Activated CD4-positive, alpha-beta T cell treated with anti-CD3 and anti-CD28 coated beads for 36 hours (primary cell): ENCODE measurements at regions of chrX and their contacts with region 1.

Region 1: DNA sequence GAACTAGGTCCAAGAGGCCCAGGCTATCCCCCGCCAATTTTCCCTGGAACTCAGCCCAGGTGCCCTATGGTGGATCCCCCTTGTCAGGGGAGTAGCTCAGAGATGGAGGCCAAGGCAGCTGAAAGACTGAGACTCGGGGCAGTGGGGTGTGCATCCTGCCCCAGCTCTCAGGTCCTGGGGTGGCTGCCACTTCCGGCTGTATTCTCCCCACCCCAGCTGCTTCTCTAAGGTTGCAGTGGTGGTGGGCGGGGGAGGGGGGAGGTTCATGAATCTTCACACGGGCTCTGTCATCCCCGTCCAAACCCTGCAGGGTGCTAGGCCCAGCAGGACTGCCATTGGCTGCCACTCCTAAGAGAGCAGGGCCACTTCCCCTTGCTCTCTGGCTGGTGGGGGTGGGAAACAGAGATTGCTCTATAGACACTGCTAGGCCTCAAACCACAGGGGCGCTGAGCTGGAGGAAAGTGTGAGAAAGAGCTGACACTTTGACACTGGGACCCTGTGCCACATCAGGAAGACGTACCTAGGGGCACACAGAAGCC is 1.5 kb downstream of the SASH3 start:
- DNase-seq: peak; percentile 91
- ATAC-seq: peak; percentile 80
- H3K4me3 Mint-ChIP-seq: peak overlapping the region; percentile 79
- H3K27ac Mint-ChIP-seq: peak overlapping the region; percentile 97
- H3K4me1 Mint-ChIP-seq: peaks cover 50% of the 10 kb centered on the region
- H3K27me3 Mint-ChIP-seq: no peaks in the 10 kb centered on the region

Region 2: GRCh38 chrX:129678614-129679195 is 102.5 kb before region 1 on chrX:
- CTCF ChIA-PET with region 1: no interaction called
- POLR2A ChIA-PET with region 1: no interaction called
- intact Hi-C with region 1: loop called in 1 of 2 experiments (anchors 1 kb)
- DNase-seq: peak; percentile 62
- ATAC-seq: peak; percentile 69
- H3K4me3 Mint-ChIP-seq: peak overlapping the region; percentile 21
- H3K27ac Mint-ChIP-seq: peak overlapping the region; percentile 55
- H3K4me1 Mint-ChIP-seq: peaks cover 15% of the 10 kb centered on the region
- H3K27me3 Mint-ChIP-seq: no peaks in the 10 kb centered on the region

Region 3: GRCh38 chrX:129759576-129760061 is 21.6 kb before region 1 on chrX:
- CTCF ChIA-PET with region 1: interaction called, 5 read pairs
- POLR2A ChIA-PET with region 1: interaction called, 5 read pairs
- intact Hi-C with region 1: loop called (anchors 1 kb)
- DNase-seq: peak; percentile 79
- ATAC-seq: peak; percentile 81
- H3K4me3 Mint-ChIP-seq: peak overlapping the region; percentile 35
- H3K27ac Mint-ChIP-seq: peak overlapping the region; percentile 90
- H3K4me1 Mint-ChIP-seq: peaks cover 55% of the 10 kb centered on the region
- H3K27me3 Mint-ChIP-seq: no peaks in the 10 kb centered on the region

Region 4: GRCh38 chrX:130086447-130087206 is 305.4 kb after region 1 on chrX:
- CTCF ChIA-PET with region 1: no interaction called
- POLR2A ChIA-PET with region 1: no interaction called
- intact Hi-C with region 1: loop called in 1 of 2 experiments (anchors 5 kb)
- DNase-seq: peak; percentile 85
- ATAC-seq: peak; percentile 53
- H3K4me3 Mint-ChIP-seq: peak overlapping the region; percentile 74
- H3K27ac Mint-ChIP-seq: peak overlapping the region; percentile 94
- H3K4me1 Mint-ChIP-seq: peaks cover 82% of the 10 kb centered on the region
- H3K27me3 Mint-ChIP-seq: no peaks in the 10 kb centered on the region

Region 5: DNA sequence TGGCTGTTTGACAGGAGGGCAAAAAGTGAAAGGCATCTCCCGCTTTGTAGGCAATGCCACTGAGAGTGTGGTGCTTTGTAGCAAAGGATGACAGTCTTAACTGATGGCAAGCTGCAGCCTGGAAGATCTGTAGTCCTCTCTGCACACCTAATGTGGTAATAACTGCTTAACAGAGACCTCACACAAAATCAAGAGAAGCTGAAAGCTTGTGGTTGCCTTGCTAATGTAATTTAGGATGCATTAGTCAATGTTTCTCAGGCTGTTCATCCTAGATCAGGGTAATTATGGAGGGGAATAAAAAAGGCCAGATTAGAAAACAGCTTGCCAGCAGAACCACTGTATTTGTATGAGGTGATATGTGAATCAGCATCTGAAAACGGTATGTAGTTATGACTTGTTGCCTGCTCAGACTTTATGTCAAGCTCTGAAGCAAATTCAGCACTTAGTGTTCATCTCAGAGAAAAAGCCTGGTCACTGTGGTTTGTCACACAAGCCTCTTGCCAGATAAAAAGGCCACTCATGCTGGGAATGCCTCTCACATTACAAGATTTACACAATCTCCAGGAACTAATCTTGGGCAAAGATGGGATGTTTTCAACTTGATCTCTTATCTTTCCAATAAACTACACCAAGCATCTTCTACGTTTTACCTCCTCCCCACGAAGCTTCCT is 991.0 kb after region 1 on chrX:
- CTCF ChIA-PET with region 1: no interaction called
- POLR2A ChIA-PET with region 1: no interaction called
- intact Hi-C with region 1: no loop called
- DNase-seq: no peak
- ATAC-seq: peak; percentile 26
- H3K4me3 Mint-ChIP-seq: no peak overlapping the region
- H3K27ac Mint-ChIP-seq: no peak overlapping the region
- H3K4me1 Mint-ChIP-seq: peaks cover 14% of the 10 kb centered on the region
- H3K27me3 Mint-ChIP-seq: no peaks in the 10 kb centered on the region